ENCODE measurements at regions of chr16 and their contacts with region 1.

Region 1: DNA sequence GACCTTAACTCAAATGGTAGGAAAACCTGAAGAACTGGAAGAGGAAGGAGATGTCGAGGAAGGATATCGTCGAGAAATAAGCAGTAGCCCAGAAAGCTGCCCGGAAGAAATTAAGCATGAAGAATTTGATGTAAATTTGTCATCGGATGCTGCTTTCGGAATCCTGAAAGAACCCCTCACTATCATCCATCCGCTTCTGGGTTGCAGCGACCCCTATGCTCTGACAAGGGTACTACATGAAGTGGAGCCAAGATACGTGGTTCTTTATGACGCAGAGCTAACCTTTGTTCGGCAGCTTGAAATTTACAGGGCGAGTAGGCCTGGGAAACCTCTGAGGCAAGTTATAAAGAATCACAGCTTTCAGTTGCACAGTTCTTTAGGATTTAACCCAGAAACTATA is 15.5 kb downstream of the ERCC4 start:
- DNase-seq: no peak
- ATAC-seq: no peak

Region 2: GRCh38 chr16:14193316-14193871 is 258.0 kb after region 1 on chr16:
- intact Hi-C with region 1: loop called (anchors 10 kb)
- DNase-seq: no peak
- ATAC-seq: no peak

Measured in left ventricle myocardium superior (tissue), 1 donor.